ENCODE measurements at regions of chr22 and their contacts with region 1.

Region 1: GRCh38 chr22:17501679-17502285 is 61.5 kb upstream of the SLC25A18 start:
- DNase-seq: peak; percentile 23
- H3K4me3 Mint-ChIP-seq: no peak overlapping the region
- H3K27ac Mint-ChIP-seq: no peak overlapping the region
- H3K4me1 Mint-ChIP-seq: peaks cover 4% of the 10 kb centered on the region
- H3K27me3 Mint-ChIP-seq: peaks cover 3% of the 10 kb centered on the region

Region 2: DNA sequence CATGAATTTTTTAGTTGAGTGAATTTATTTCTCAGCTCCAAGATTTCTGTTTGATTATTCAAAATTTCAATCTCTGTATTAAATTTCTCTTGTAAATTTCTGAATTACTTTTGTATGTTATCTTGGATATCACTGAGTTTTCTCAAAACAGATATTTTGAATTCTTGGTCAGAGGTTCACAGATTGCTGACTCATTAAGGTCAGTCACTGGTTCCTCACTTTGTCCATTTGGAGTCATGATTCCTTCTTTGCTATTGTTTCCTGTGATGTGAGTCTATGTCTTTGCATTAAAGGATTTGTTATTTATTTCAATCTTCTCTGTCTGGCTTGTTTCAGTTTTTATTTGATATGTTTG is 427.2 kb before region 1 on chr22:
- intact Hi-C with region 1: loop called (anchors 1 kb)
- DNase-seq: no peak
- H3K4me3 Mint-ChIP-seq: no peak overlapping the region
- H3K27ac Mint-ChIP-seq: no peak overlapping the region
- H3K4me1 Mint-ChIP-seq: peaks cover 21% of the 10 kb centered on the region
- H3K27me3 Mint-ChIP-seq: peaks cover 36% of the 10 kb centered on the region

Region 3: DNA sequence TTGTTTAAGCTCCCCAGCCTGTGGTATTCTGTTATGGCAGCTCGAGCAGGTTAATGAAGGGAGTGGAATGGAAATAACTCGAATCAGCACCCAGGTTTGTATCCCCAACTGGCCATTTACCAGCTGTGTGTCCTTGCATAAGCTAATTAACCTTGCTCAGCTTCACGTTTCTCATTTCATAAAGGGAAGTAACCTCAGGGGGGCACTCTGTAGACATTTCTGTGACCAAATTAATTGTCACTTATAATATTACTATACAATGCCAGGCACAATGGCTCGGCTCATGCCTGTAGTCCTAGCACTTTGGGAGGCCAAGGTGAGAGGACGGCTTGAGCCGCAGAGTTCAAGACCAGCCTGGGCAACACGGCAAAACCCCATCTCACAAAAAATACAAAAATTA is 296.4 kb before region 1 on chr22:
- intact Hi-C with region 1: loop called (anchors 2 kb)
- DNase-seq: no peak
- H3K4me3 Mint-ChIP-seq: no peak overlapping the region
- H3K27ac Mint-ChIP-seq: no peak overlapping the region
- H3K4me1 Mint-ChIP-seq: no peaks in the 10 kb centered on the region
- H3K27me3 Mint-ChIP-seq: no peaks in the 10 kb centered on the region